Right ventricle myocardium inferior (tissue), 1 donor: ENCODE measurements at regions of chr9 and their contacts with region 1.

Region 1: DNA sequence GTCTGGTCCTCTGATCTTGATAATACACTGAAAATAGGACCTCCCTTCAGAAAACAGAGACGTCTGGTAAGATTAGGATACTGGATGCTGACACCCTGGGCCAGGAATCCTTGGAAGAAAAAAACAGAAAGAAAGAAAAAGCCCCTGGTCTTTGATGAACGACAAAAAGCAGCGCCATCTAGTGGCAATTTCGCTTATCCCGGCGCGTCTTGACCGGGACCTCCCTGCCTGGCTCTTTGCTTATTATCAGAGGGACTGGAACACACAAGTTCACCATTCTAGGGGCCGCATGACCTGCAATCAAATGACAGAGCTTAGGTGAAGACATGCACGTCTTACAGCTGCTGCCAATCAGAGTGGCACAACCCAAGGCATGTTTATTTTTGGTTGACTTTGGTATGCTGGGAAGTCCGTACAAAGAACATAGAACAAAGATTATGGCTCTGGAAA is 114.9 kb upstream of the NFIB start:
- DNase-seq: peak; percentile 55
- ATAC-seq: peak; percentile 84

Region 2: DNA sequence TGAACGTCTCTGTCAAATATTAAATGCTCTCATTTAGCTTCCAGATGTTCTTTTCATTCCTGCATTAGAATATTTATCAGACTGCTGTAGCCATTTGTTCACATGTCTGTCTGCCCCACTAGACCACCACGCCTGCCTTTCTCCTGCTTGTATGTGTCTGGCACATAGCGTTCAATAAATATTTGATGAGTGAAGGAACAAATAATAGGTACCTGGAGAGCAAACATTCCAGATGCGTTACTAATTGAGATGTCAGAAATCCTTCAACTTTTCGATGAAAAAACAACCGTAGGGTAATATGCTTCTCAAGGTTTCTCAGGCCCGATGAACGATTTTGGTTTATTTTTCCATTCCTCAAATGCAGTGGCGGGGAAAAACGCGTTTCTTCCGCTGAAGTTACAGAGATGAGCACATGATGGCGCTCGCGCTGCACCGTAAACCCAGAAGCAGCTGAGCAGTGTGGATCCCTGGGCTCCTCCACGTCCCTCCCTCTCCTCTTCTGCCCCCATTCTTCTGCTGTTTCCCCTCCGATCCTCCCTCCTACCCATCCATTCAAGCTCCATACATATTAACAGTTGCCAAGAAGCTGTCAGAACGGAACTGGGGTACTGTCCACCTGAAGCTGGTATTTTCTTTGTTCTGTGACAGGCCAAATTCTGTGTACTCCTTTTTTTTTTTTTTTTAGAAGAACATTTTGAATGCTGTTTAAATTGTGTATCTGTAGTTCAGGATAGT is 1394.7 kb before region 1 on chr9:
- intact Hi-C with region 1: loop called (anchors 10 kb)
- DNase-seq: peak; percentile 73
- ATAC-seq: peak; percentile 81

Region 3: DNA sequence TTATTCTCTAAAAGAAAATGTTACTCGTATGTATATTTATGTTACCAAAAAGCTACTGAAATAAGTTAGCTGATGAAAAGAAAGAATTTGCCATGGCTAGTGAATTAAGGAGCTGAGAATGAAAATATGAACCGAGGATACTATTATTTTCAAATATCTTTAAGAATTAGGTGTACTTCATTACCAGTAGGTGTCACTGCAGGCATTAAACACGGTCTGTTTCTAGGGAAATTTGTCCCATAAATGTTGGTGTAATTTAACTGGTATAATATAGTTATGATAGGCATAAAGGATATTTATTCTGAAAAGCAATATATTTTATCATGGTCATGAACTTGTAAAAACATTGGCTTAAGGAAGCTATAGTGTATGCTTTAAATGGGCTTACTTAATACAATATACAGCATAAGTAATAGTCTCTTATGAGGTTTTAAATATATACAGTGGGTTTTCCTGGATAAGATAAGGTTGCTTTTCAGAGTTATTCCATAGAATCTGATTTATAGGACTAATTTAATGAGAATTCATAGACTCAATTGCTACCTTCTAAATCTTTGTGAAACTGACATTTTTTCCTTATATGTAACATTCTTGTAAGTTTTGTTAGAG is 1076.9 kb before region 1 on chr9:
- intact Hi-C with region 1: loop called (anchors 5 kb)
- DNase-seq: no peak
- ATAC-seq: no peak

Region 4: DNA sequence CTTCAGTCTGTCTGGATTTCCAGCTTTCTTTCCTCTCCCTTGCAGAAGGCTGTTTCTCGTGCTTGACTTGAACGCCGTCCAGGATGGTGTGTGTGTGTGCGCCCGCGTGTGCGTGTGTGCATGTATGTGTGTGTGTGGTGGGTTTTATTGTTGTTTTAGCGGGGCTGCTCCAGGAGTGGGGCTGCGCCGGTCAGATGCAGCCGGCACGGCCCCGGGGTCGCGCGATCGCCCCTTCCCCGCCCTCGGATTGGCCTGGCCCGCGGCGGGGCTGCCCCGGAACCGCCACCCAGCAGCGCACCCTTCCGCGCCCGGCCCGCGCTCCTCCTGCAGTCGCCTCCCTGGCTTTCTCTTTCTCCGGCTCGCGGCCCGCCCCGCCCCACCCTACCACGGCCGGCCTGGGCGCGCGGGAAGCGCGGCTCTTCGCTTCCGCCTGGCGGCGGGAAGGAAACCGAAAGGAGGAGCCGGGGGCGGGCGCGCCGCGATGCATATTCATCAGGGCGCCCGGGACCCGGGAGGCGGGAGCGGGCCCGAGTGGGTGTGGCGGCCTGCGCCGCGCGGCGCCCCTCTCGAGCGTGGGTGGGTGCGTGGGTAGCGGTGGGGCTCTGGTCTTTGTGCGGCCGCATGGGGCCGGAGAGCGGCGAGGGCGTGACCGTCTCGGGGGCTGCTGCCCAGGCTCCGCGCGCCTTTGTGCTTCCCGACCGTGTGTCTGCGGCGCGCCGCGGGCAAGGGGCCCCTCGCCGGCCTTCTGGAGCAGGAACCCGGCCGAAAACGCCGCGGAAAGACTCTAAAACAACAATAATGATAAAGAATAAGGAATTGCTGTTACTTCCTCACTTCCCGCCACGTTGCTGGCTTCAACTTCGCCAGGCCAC is 106.4 kb before region 1 on chr9:
- intact Hi-C with region 1: loop called (anchors 5 kb)
- DNase-seq: peak; percentile 94
- ATAC-seq: peak; percentile 95

Region 5: GRCh38 chr9:14347406-14348122 is 81.2 kb before region 1 on chr9:
- intact Hi-C with region 1: loop called (anchors 2 kb)
- DNase-seq: peak; percentile 75
- ATAC-seq: peak; percentile 67